ENCODE measurements at regions of chr13 and their contacts with region 1.

Region 1: DNA sequence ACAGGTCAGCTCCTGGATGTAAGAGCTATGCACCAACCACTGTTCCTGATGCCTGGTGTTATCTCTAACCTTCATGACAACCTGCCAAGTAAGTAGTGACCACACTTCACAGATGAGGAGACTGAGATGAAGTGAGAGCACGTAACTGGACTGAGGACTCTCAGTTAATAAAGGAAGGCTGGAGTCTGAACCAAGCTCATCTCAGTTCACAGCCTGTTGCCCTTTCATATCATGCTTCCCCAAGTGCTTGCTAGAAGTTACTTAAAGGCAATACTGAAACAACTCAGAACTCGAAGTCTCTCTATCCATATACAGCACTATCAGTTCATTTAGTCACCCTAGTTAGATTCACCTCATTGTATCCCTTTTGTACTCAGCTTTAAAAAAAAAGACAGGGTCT is 119.7 kb downstream of the ABCC4 start:
- DNase-seq: no peak
- ATAC-seq: no peak
- H3K4me3 ChIP-seq: no peak overlapping the region
- H3K27ac ChIP-seq: no peak overlapping the region
- H3K4me1 ChIP-seq: peaks cover 0 to 10% (median 8%) of the 10 kb centered on the region in 3 donors
- H3K27me3 ChIP-seq: no peaks in the 10 kb centered on the region
- CTCF ChIP-seq: no peak

Region 2: DNA sequence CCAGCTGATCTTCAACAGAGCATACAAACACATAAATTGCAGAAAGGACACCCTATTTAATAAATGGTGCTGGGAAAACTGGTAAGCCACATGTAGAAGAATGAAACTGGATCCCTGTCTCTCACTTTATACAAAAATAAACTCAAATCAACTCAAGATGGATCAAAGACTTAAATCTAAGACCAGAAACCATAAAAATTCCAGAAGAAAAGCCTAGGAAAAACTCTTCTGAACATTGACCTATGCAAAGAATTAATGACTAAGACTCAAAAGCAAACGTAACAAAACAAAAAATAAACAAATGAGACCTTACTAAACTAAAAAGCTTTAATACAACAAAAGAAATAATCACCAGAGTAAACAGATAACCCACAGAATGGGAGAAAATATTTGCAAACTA is 194.1 kb after region 1 on chr13:
- intact Hi-C with region 1: no loop called
- DNase-seq: no peak
- ATAC-seq: no peak
- H3K4me3 ChIP-seq: no peak overlapping the region
- H3K27ac ChIP-seq: no peak overlapping the region
- H3K4me1 ChIP-seq: peaks cover 0 to 3% (median 0%) of the 10 kb centered on the region in 3 donors
- H3K27me3 ChIP-seq: no peaks in the 10 kb centered on the region
- CTCF ChIP-seq: no peak

Region 3: DNA sequence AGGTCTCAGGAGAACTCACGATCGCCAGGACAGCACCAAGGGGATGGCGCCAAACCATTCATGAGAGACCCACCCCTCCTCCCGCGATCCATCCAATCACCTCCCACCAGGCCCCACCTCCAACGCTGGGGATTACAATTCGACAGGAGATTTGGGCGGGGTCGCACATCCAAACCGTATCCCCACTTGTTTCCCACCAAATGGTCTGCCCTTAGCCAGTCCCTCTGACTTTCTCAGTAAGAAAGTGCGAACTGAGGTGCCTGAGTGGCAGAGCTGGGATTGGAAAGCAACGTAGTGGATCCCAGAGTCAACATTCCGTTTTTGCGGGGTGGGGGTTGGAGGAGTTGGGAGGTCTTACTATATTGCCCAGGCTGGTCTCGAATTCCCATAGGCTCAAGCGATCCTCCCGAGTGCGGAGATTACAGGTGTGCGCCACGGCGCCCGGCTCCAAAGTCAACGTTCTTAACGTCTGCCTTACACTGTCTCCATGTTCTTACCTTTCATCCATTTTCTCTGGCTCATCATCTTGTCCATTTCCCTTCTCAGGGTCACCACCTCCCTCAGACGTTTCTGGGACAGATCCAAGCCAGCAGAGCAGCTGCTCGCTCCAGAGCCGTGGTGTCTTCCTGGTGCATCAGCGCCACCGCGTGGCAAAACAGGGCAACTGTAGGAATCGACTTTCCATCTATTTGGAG is 222.4 kb after region 1 on chr13:
- intact Hi-C with region 1: loop called in 1 of 3 experiments (anchors 10 kb)
- DNase-seq: peak; percentile 76 to 91 (median 86)
- ATAC-seq: peak; percentile 94 to 99 (median 98)
- H3K4me3 ChIP-seq: peak overlapping the region in 2 of 4 donors; percentile 3 to 28
- H3K27ac ChIP-seq: no peak overlapping the region
- H3K4me1 ChIP-seq: no peaks in the 10 kb centered on the region
- H3K27me3 ChIP-seq: no peaks in the 10 kb centered on the region
- CTCF ChIP-seq: peak; percentile 80 to 94 (median 88)